RWPE1 (cell line): ENCODE measurements at regions of chr17 and their contacts with region 1.

Region 1: GRCh38 chr17:43483674-43484372 is at the start of gene DHX8:
- DNase-seq: peak; percentile 94
- H3K27ac ChIP-seq: peak within 1 kb of the TSS; percentile 86
- CTCF ChIP-seq: peak; percentile 100

Region 2: DNA sequence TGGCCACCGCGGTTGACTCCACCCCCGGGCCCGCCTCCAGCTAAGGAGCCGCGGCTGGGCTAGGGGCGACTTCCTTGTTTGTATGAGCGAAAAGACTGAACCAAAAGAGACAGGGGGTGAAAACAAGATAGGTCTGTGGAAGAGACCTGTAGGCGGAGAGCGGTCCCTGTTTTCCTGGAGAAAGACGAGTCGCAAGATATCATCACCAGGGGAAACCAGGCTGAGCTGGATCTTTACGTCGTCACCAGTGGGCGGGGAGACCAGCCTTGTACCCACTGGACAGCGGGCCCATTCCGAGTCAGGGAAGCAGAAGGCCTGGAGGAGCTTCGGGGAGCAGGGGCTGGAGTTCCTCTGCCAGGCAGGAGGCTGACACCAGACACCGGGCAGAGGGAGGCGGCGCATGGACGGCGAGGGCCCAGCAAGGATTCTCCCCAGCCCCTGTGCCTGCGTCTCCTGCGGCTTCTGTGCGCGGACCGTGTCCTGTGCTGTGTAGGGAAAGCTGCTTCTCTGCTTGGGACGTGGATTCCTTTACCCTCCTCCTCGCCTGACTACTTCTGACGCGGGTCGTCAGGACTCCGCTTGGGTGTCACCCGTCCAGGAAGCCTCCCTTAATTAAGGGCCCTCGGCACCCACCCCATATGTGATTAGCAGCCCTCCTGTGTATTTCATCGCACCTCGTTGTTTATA is 95.3 kb before region 1 on chr17:
- CTCF ChIA-PET with region 1: interaction called, 86 read pairs
- POLR2A ChIA-PET with region 1: interaction called, 3 read pairs
- DNase-seq: peak; percentile 77
- H3K27ac ChIP-seq: peak overlapping the region; percentile 98
- CTCF ChIP-seq: no peak

Region 3: GRCh38 chr17:43393944-43394482 is 89.8 kb before region 1 on chr17:
- CTCF ChIA-PET with region 1: interaction called, 86 read pairs
- POLR2A ChIA-PET with region 1: interaction called, 6 read pairs
- DNase-seq: peak; percentile 89
- H3K27ac ChIP-seq: peak overlapping the region; percentile 63
- CTCF ChIP-seq: peak; percentile 84

Region 4: GRCh38 chr17:43467981-43468581 is 15.7 kb before region 1 on chr17:
- CTCF ChIA-PET with region 1: interaction called, 20 read pairs
- POLR2A ChIA-PET with region 1: interaction called, 3 read pairs
- DNase-seq: peak; percentile 54
- H3K27ac ChIP-seq: peak overlapping the region; percentile 97
- CTCF ChIP-seq: no peak

Region 5: GRCh38 chr17:43584666-43585102 is 100.9 kb after region 1 on chr17:
- CTCF ChIA-PET with region 1: no interaction called
- POLR2A ChIA-PET with region 1: interaction called, 12 read pairs
- DNase-seq: no peak
- H3K27ac ChIP-seq: no peak overlapping the region
- CTCF ChIP-seq: no peak

Region 6: GRCh38 chr17:43645765-43646481 is 162.1 kb after region 1 on chr17:
- CTCF ChIA-PET with region 1: no interaction called
- POLR2A ChIA-PET with region 1: no interaction called
- DNase-seq: peak; percentile 46
- H3K27ac ChIP-seq: no peak overlapping the region
- CTCF ChIP-seq: no peak